Esophagus muscularis mucosa (tissue), 4 donors: ENCODE measurements at regions of chr3 and their contacts with region 1.

Region 1: DNA sequence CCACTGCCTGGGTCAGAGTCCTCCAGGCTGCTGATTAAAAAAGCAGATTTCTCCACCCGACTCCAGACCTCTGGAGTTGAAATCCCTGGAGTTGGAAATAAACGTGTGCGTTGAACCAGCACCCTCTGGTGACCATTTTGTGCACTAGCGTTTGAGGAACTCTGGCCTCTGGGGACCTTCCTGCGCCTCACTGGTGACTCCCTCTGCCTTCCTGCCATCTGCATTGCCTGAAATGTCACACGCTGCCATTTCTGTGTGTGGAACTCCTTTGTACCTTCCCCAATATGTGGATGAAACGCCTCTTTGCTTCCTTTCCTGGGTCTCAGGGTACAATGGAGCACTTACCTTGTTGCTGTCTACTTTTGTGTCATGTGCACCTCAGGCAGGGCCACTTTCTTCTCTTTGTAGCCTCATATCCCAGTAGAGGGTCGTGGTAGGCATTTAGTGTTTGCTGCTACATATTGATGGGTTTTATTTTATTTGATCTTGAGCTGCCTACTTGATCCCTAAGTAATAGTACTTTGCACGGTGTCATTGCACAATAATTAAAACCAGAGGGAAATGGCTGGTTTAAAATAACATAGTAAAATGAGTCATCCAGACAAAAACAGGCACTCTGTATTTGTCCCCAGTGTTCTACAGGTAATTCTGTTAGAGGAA is 56.8 kb downstream of the GPR171 start:
- DNase-seq: no peak
- H3K4me3 ChIP-seq: peak overlapping the region in 1 of 4 donors; percentile 11
- H3K27ac ChIP-seq: no peak overlapping the region
- H3K4me1 ChIP-seq: peaks cover 6 to 11% (median 7%) of the 10 kb centered on the region in 4 donors
- H3K27me3 ChIP-seq: no peaks in the 10 kb centered on the region
- CTCF ChIP-seq: peak; percentile 77 to 89 (median 82)
- EP300 ChIP-seq: no peak
- POLR2A ChIP-seq: no peak

Region 2: GRCh38 chr3:150787741-150788370 is 358.3 kb before region 1 on chr3:
- intact Hi-C with region 1: loop called (anchors 5 kb)
- DNase-seq: no peak
- H3K4me3 ChIP-seq: no peak overlapping the region
- H3K27ac ChIP-seq: no peak overlapping the region
- H3K4me1 ChIP-seq: peaks cover 0 to 3% (median 0%) of the 10 kb centered on the region in 4 donors
- H3K27me3 ChIP-seq: peaks cover 0 to 10% (median 0%) of the 10 kb centered on the region in 4 donors
- CTCF ChIP-seq: peak; percentile 81 to 91 (median 89)
- EP300 ChIP-seq: no peak
- POLR2A ChIP-seq: no peak

Region 3: GRCh38 chr3:150925751-150926201 is 220.4 kb before region 1 on chr3:
- intact Hi-C with region 1: loop called (anchors 5 kb)
- DNase-seq: no peak
- H3K4me3 ChIP-seq: no peak overlapping the region
- H3K27ac ChIP-seq: no peak overlapping the region
- H3K4me1 ChIP-seq: peaks cover 0 to 6% (median 1%) of the 10 kb centered on the region in 4 donors
- H3K27me3 ChIP-seq: peaks cover 0 to 6% (median 0%) of the 10 kb centered on the region in 4 donors
- CTCF ChIP-seq: peak in 2 of 3 experiments; percentile 18 to 38
- EP300 ChIP-seq: no peak
- POLR2A ChIP-seq: no peak